Vagina (tissue), 2 donors: ENCODE measurements at regions of chr19 and their contacts with region 1.

Region 1: DNA sequence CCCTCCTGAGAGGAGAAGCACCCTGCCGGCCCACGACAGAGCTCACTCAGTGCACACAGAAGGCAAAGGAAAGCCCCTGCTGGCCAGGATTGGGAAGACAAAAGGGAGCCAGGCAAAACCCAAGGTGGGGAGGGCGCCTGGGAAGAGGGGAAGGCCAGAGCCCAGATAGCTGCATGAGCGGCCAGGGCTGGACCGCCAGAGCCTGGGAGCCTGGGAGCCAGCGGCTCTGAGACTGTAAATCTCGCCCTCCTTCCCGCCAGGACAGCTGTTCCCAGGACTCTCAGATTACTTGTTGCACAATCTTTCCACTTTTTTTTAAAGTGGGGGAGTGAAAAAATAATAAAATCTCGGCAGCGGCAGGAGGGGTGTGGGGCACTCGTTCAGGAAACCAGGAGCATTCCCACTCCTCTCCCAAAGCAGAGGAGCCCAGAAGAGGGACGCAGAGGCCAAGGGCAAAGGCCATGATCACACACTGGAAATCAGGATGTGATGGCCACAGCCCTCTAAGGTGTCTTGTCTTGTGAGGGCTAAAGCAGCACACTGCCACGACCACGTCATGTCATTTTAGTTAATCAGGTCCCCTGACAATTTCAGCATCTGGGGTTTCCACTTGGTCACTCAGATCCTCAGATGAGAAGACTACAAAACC is 19.6 kb upstream of the EPHX3 start:
- DNase-seq: peak in 1 of 2 donors; percentile 94
- H3K4me3 ChIP-seq: peak overlapping the region; percentile 1 to 25
- H3K27ac ChIP-seq: peak overlapping the region; percentile 91
- H3K4me1 ChIP-seq: peaks cover 70% of the 10 kb centered on the region
- H3K27me3 ChIP-seq: no peaks in the 10 kb centered on the region
- CTCF ChIP-seq: peak in 1 of 3 experiments; percentile 68
- POLR2A ChIP-seq: no peak

Region 2: DNA sequence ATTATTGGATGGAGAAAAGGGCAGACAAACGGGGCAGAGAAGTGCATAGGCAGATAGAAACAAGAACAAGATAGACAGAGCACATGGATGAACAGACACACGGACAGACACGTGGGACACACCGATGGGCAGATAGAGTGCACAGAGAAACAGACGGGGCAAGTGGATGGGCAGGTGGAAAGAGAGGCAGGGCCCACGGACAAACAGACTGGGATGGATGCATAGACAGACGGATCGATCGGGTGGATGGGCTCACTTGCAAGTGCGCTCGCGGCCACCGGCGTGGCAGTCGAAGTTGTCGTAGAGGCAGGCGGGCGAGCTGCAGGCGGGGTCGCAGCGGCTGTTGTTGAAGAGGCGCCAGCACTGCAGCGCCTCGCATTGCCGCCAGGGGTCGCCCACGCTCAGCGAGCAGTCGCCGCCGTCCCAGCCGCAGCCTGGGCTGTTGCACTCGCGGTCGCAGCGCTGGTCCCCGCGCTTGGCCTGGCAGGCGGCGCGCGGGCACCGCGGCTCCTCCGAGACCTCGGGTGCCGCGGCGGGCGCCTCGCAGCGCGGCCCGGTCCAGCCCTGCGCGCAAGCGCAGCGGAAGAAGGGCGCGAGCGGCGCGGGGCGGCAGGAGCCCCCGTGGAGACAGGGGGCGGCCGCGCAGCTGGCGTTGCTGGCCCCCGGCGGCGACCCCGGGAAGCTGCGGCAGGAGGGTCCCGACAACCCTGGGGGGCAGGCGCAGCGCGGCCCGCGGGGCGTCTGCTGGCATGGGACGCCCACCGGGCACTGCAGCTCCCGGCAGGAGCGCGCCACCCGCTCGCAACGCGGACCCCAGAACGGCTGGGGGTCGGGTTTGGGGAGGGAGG is 74.4 kb before region 1 on chr19:
- intact Hi-C with region 1: loop called (anchors 5 kb)
- DNase-seq: no peak
- H3K4me3 ChIP-seq: peak overlapping the region in 1 of 2 donors; percentile 50
- H3K27ac ChIP-seq: peak overlapping the region; percentile 15
- H3K4me1 ChIP-seq: peaks cover 4% of the 10 kb centered on the region
- H3K27me3 ChIP-seq: no peaks in the 10 kb centered on the region
- CTCF ChIP-seq: peak; percentile 83 to 95 (median 95)
- POLR2A ChIP-seq: no peak

Region 3: GRCh38 chr19:15195371-15196334 is 56.2 kb before region 1 on chr19:
- intact Hi-C with region 1: loop called (anchors 2 kb)
- DNase-seq: no peak
- H3K4me3 ChIP-seq: peak overlapping the region; percentile 39 to 53
- H3K27ac ChIP-seq: peak overlapping the region; percentile 84
- H3K4me1 ChIP-seq: peaks cover 53% of the 10 kb centered on the region
- H3K27me3 ChIP-seq: no peaks in the 10 kb centered on the region
- CTCF ChIP-seq: no peak
- POLR2A ChIP-seq: no peak

Region 4: DNA sequence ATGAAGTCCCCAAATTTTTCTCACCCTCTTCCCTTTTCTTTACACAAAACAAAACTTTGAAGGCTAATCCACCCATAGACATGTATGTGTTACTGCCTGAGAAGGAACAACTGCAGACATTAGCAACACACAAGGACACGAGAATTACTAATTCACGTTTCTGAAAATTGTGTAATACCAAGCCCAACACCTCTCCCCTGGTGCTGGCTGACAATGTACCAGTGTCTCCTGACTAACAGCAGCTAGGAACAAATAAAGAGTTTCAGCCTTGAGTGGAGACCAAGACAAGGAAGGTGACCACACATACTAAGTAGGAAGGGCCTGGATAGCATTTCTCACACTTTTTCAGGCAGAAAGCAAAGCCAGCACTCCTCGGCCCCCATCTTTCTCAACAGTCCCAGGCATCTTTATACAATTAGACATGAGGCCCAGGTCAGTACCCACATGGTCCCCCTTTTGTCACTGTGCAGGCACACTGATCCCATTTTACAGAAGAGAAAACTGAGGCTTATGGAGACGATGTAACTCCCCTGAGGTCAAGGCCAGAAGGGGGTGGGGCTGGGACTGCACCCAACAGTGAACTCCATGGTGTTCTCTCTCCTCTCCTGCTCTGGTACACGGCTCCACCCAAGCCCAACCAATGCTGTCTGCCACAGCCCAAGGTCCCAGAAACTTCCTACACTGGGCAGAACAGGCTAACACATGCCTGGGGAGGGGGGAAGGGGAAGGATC is 71.8 kb after region 1 on chr19:
- intact Hi-C with region 1: no loop called
- DNase-seq: no peak
- H3K4me3 ChIP-seq: no peak overlapping the region
- H3K27ac ChIP-seq: peak overlapping the region; percentile 49
- H3K4me1 ChIP-seq: peaks cover 96% of the 10 kb centered on the region
- H3K27me3 ChIP-seq: no peaks in the 10 kb centered on the region
- CTCF ChIP-seq: no peak
- POLR2A ChIP-seq: no peak